Heart right ventricle (tissue), 16 donors: ENCODE measurements at regions of chr3 and their contacts with region 1.

Region 1: GRCh38 chr3:172470588-172470987 is 22.3 kb upstream of the GHSR start:
- DNase-seq: no peak
- ATAC-seq: no peak
- H3K4me3 ChIP-seq: no peak overlapping the region
- H3K27ac ChIP-seq: no peak overlapping the region
- H3K4me1 ChIP-seq: peaks cover 0 to 8% (median 0%) of the 10 kb centered on the region in 9 donors
- H3K27me3 ChIP-seq: no peaks in the 10 kb centered on the region
- CTCF ChIP-seq: no peak

Region 2: DNA sequence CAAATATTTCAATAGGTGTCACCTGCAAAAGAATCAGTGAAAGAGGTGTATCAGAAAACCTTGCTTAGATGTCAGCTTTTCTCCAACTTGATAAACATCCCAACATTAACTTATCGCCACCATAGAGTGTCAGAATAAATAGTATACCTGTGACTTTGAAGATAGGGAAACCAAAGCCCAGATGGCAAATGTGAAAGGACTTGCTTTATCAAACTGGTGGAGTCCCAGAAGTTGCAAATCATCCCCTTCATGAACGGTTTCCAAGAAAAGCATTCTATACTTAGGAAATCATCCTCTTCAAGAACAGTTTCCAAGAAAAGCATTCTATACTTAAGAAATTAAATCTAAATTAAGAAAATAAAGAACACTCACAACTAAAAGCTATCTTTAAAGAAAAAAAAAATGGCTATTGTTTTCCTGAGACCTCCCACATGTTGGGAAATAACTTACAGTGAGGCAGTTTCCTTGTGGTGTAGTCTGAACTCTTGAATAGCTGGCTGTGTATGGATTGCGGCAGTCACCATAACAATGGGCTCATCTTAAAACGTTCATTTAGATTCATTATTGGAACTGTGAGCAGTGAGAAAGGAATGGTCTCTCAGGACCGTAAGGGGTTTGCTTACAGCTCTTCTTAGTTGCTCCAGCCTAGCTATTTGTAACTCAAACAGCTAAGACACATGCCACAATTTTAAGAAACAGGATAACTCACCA is 78.8 kb before region 1 on chr3:
- intact Hi-C with region 1: loop called in 1 of 10 experiments (anchors 5 kb)
- DNase-seq: no peak
- ATAC-seq: peak in 4 of 8 donors; percentile 39 to 70 (median 43)
- H3K4me3 ChIP-seq: no peak overlapping the region
- H3K27ac ChIP-seq: peak overlapping the region in 2 of 10 donors; percentile 12 to 47
- H3K4me1 ChIP-seq: peaks cover 0 to 30% (median 15%) of the 10 kb centered on the region in 9 donors
- H3K27me3 ChIP-seq: no peaks in the 10 kb centered on the region
- CTCF ChIP-seq: no peak